CD8-positive, alpha-beta T cell (primary cell): ENCODE measurements at regions of chr4 and their contacts with region 1.

Region 1: DNA sequence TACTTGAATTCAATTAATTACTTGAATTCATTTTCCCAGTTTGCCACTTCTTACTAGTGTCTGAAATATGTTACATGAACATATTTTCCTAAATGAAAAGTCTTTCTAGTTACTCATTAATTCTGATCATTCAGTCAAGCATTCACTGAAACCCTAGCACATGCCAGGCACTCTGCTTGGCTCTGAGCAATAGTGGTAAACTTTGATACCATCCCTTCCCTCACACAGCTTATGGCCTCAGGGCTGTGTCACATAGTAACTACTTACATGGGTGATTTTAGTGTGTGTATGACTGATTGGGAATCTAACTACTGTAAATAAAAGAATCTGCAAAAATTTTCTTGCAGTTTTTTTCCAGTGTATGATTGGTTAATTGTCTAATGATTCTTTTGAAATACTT is 32.7 kb downstream of the METAP1 start:
- DNase-seq: no peak
- ATAC-seq: no peak
- H3K4me3 ChIP-seq: no peak overlapping the region
- H3K4me3 Mint-ChIP-seq: no peak overlapping the region
- H3K27ac ChIP-seq: no peak overlapping the region
- H3K27ac Mint-ChIP-seq: no peak overlapping the region
- H3K4me1 ChIP-seq: no peaks in the 10 kb centered on the region
- H3K4me1 Mint-ChIP-seq: peaks cover 73% of the 10 kb centered on the region
- H3K27me3 ChIP-seq: no peaks in the 10 kb centered on the region
- H3K27me3 Mint-ChIP-seq: no peaks in the 10 kb centered on the region
- CTCF ChIP-seq: no peak

Region 2: GRCh38 chr4:99013402-99013843 is 14.8 kb before region 1 on chr4:
- CTCF ChIA-PET with region 1: no interaction called
- POLR2A ChIA-PET with region 1: interaction called, 4 read pairs
- intact Hi-C with region 1: loop called in 1 of 2 experiments (anchors 2 kb)
- DNase-seq: no peak
- ATAC-seq: no peak
- H3K4me3 ChIP-seq: no peak overlapping the region
- H3K4me3 Mint-ChIP-seq: no peak overlapping the region
- H3K27ac ChIP-seq: no peak overlapping the region
- H3K27ac Mint-ChIP-seq: no peak overlapping the region
- H3K4me1 ChIP-seq: no peaks in the 10 kb centered on the region
- H3K4me1 Mint-ChIP-seq: peaks cover 45% of the 10 kb centered on the region
- H3K27me3 ChIP-seq: no peaks in the 10 kb centered on the region
- H3K27me3 Mint-ChIP-seq: no peaks in the 10 kb centered on the region
- CTCF ChIP-seq: no peak

Region 3: GRCh38 chr4:99043346-99043745 is 15.2 kb after region 1 on chr4:
- CTCF ChIA-PET with region 1: interaction called, 11 read pairs
- POLR2A ChIA-PET with region 1: no interaction called
- intact Hi-C with region 1: loop called in 1 of 2 experiments (anchors 1 kb)
- DNase-seq: peak in 2 of 9 experiments; percentile 54 to 75
- ATAC-seq: peak; percentile 96
- H3K4me3 ChIP-seq: no peak overlapping the region
- H3K4me3 Mint-ChIP-seq: peak overlapping the region; percentile 20
- H3K27ac ChIP-seq: peak overlapping the region; percentile 54 to 85
- H3K27ac Mint-ChIP-seq: peak overlapping the region; percentile 84
- H3K4me1 ChIP-seq: peaks cover 20% of the 10 kb centered on the region
- H3K4me1 Mint-ChIP-seq: peaks cover 19% of the 10 kb centered on the region
- H3K27me3 ChIP-seq: no peaks in the 10 kb centered on the region
- H3K27me3 Mint-ChIP-seq: no peaks in the 10 kb centered on the region
- CTCF ChIP-seq: no peak

Region 4: DNA sequence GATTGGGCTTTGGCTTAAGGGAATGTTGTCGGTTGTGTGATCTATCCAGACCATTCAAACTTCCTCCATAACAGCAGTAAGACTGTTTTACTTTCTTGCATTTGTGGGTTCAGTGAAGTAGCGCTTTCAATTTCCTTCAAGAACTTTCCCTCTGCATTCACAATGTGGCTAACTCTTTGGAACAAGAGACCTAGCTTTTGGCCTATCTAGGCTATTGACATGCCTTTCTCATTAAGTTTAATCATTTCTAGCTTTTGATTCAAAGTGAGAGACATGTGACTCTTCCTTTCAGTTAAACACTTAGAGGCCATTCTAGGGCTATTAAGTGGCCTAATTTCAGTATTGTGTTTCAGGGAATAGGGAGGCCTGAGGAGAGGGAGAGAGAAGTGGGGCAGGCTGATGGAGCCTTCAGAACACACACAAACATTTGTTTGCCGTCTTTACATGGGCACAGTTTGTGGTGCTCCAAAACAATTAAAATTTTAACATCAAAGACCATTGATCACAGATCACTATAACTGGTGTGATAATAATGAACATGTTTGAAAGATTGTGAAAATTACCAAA is 26.3 kb after region 1 on chr4:
- CTCF ChIA-PET with region 1: interaction called, 9 read pairs
- POLR2A ChIA-PET with region 1: interaction called, 7 read pairs
- intact Hi-C with region 1: loop called (anchors 1 kb)
- DNase-seq: no peak
- ATAC-seq: no peak
- H3K4me3 ChIP-seq: no peak overlapping the region
- H3K4me3 Mint-ChIP-seq: no peak overlapping the region
- H3K27ac ChIP-seq: peak overlapping the region in 1 of 2 experiments; percentile 15
- H3K27ac Mint-ChIP-seq: peak overlapping the region; percentile 42
- H3K4me1 ChIP-seq: peaks cover 3% of the 10 kb centered on the region
- H3K4me1 Mint-ChIP-seq: peaks cover 7% of the 10 kb centered on the region
- H3K27me3 ChIP-seq: no peaks in the 10 kb centered on the region
- H3K27me3 Mint-ChIP-seq: no peaks in the 10 kb centered on the region
- CTCF ChIP-seq: no peak